Panc1 (cell line): ENCODE measurements at regions of chrX and their contacts with region 1.

Region 1: DNA sequence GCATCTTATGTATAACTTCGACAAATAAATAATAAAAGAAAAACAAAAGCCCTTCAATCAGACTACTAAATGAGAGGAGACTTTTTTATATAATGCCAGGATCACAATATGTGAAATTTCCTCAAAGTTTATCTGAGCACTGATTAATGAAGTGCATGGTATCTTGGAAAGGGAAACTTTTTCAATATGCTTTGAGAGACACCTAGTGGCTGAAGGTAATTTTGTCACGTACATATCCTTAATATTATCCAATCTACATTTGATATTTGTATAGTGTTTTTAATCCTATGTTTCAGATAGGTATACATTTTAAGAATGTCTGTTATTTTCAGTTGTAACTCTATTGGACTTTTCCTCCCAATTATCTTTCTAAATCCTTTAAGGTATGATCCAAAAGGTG is 146.8 kb downstream of the KLHL4 start:
- DNase-seq: peak; percentile 38
- ATAC-seq: peak; percentile 81
- H3K4me3 ChIP-seq: no peak overlapping the region
- H3K27ac ChIP-seq: peak overlapping the region; percentile 34; the same call in 1 of the 2 replicates
- H3K4me1 ChIP-seq: no peaks in the 10 kb centered on the region; the same call in 1 of the 2 replicates
- H3K27me3 ChIP-seq: no peaks in the 10 kb centered on the region
- CTCF ChIP-seq: peak; percentile 58; the same call in 1 of the 2 replicates

Region 2: GRCh38 chrX:87338510-87338909 is 325.9 kb before region 1 on chrX:
- CTCF ChIA-PET with region 1: no interaction called
- POLR2A ChIA-PET with region 1: no interaction called
- in situ Hi-C with region 1: no loop called
- intact Hi-C with region 1: loop called (anchors 1 kb)
- DNase-seq: peak; percentile 17
- ATAC-seq: no peak
- H3K4me3 ChIP-seq: no peak overlapping the region
- H3K27ac ChIP-seq: no peak overlapping the region; the same call in 1 of the 2 replicates
- H3K4me1 ChIP-seq: no peaks in the 10 kb centered on the region; the same call in 1 of the 2 replicates
- H3K27me3 ChIP-seq: no peaks in the 10 kb centered on the region
- CTCF ChIP-seq: peak; percentile 42; the same call in 1 of the 2 replicates

Region 3: DNA sequence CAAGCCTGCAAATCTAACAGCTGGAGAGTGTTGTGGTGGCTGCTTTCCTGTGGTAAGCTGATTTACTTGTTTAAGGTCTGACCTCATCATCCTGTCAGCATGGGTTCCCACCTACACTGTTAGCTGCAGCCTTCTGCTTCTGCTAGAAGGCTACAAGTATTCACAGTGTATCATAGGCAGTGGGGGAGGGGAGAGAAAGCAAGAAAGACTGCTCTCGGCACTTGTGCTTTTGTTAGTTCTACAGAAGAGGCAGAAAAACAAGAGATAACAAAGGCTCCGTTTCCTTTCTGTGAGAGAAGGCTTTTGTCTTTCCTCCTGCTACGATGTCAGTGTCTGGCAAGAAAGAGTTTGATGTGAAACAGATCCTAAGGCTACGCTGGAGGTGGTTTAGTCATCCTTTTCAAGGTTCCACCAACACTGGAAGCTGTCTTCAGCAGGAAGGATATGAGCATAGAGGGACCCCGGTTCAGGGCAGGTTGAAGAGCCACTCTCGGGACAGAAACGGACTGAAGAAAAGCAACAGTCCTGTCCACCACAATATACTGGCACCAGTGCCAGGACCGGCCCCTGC is 146.7 kb before region 1 on chrX and contains the start of gene KLHL4:
- CTCF ChIA-PET with region 1: no interaction called
- POLR2A ChIA-PET with region 1: no interaction called
- in situ Hi-C with region 1: no loop called
- intact Hi-C with region 1: loop called (anchors 5 kb)
- DNase-seq: no peak
- ATAC-seq: peak; percentile 97
- H3K4me3 ChIP-seq: peak within 1 kb of the TSS; percentile 59 to 94
- H3K27ac ChIP-seq: peak within 1 kb of the TSS; percentile 91
- H3K4me1 ChIP-seq: peaks cover 20% of the 10 kb centered on the region
- H3K27me3 ChIP-seq: no peaks in the 10 kb centered on the region
- CTCF ChIP-seq: no peak
- total RNA-seq, gene KLHL4: 27.6 TPM